OCI-LY7 (cell line): ENCODE measurements at regions of chr6 and their contacts with region 1.

Region 1: DNA sequence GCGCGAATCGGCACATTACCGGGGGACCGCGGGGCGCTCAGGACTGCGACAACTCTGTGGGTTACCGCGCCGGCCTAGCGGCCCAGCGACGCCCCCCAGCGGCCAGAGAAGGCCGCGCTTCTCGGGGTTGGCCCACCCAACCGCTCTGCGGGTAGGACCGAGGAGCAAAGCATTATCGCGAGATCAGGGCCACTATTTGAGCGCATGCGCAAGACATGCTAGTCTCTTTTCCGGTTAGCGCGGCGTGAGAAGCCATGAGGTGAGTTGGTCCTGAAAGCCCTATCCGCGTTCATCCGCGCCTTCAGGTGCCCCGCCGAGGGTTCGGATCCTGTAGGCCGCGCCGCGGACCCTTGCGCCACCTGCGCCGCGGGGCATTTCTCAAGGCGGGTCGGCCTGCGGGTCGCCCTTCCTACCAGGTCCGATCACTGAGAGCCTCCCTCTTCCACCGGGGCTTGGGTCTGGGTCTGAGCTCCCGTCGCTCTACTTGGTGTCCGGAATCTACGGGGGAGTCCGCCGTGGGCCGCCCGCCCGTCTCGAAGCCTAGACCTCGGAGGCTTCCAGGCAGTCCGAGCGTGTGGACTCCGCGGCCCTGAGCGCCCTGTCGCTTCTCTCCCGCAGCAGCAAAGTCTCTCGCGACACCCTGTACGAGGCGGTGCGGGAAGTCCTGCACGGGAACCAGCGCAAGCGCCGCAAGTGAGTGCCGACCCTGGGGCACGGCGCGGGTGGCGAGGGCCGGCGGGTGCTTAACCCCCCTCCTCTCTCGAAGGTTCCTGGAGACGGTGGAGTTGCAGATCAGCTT is at the start of gene RPL10A:
- DNase-seq: peak; percentile 98
- H3K4me3 ChIP-seq: peak within 1 kb of the TSS; percentile 91
- H3K27ac ChIP-seq: peak within 1 kb of the TSS; percentile 83
- H3K4me1 ChIP-seq: peaks cover 38% of the 10 kb centered on the region
- CTCF ChIP-seq: peak; percentile 95
- total RNA-seq, gene RPL10A: 2,473 and 2,643 TPM in 2 replicates

Region 2: DNA sequence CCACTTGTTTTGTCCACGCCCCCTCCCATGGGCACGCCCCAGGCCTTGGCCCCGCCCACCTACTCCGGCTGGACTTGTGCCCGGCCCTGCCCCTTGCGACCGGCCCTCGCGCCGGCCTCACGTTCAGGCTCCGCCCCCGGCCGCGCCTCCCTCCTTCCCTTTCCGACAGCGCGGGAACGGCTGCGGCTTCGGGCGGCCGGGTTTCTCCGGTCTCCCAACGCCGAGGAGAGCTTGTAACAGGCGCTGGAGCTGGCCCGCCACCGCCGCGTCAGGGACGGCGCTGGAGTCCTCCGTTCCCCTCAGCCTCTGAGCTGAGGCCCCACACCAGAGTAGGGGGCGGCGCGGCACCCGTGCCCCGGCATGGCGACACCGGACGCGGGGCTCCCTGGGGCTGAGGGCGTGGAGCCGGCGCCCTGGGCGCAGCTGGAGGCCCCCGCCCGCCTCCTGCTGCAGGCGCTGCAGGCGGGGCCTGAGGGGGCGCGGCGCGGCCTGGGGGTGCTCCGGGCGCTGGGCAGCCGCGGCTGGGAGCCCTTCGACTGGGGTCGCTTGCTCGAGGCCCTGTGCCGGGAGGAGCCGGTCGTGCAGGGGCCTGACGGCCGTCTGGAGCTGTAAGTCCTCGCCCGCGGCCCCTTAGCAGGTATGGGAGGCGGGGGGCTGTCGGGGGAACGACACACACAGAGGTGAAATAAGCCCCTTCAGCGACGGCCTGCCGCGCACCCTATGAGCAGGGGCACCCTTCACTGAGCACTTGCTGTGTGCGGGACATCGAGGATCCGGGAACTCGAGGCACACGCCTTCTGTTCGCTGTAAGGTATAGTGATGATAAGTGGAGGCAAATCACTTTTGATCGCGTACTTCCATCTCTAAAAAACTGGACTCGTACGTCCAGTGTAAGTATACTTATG is 15.9 kb before region 1 on chr6 and contains the start of gene FANCE:
- CTCF ChIA-PET with region 1: no interaction called
- POLR2A ChIA-PET with region 1: interaction called, 11 read pairs
- intact Hi-C with region 1: no loop called
- DNase-seq: peak; percentile 93
- H3K4me3 ChIP-seq: peak within 1 kb of the TSS; percentile 85
- H3K27ac ChIP-seq: peak within 1 kb of the TSS; percentile 48
- H3K4me1 ChIP-seq: peaks cover 32% of the 10 kb centered on the region
- CTCF ChIP-seq: no peak
- total RNA-seq, gene FANCE: 12.4 and 14.4 TPM in 2 replicates

Region 3: DNA sequence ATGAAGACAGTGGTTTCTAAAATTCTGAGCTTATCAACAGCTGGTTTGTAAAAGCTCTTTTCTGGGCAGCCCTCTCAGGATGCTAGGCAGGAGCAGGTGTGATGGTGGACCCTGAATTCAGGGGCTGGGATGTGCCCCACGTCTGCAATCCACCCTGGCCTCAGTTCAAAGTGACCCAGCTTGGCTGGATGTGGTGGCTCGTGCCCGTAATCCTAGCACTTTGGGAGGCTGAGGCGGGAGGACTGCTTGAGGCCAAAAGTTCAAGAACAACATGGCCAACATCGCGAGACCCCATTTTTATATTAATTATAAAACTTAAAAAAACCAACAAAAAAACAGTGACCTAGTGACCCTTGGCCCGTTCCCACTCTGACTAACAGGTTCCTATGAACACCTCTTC is 14.1 kb after region 1 on chr6:
- CTCF ChIA-PET with region 1: interaction called, 3 read pairs
- POLR2A ChIA-PET with region 1: interaction called, 21 read pairs
- intact Hi-C with region 1: no loop called
- DNase-seq: no peak
- H3K4me3 ChIP-seq: no peak overlapping the region
- H3K27ac ChIP-seq: no peak overlapping the region
- H3K4me1 ChIP-seq: no peaks in the 10 kb centered on the region
- CTCF ChIP-seq: no peak